ENCODE measurements at regions of chr1 and their contacts with region 1.

Region 1: DNA sequence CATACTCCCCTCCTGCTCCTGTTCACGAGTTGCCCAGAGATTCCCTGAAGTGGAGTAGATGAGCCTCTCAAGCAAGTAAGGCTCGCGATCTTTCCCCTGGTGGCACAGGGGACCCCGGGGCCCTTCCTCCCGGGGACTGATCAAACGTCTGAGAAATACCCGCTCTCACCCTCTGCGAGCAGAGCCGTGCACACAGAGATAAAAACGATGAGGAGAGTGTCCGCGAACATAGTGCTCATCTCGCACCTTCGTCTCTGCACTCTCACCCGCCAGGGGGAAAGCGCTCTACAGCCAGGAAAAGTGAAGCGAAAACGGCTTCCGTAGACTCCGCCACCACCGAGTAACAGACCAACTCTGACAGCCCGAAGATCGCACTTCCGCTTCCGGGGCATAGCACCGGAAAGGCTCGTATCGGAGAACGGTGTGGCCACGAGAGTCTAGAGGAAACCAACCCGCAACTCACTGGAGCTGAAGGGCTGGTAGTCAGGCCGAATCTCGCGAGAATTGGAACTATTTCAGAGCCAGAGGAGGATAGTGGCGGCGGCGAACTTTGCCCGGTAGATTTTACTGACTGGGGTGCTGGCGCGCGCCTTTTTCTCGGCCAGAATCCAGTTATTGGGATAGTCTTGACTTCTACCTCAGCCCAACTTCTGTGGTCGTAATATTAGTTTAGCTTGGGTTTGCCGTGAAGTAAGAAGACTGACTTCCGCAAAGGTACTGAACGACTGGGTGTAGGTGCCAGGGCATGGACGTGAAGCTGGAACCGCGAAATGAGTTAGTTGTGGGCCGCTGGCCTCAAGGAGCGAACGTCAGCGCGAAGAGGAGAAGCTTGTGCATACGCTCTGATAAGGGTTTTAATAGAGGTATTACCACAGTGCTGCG is at the start of gene TMCO1:
- DNase-seq: peak; percentile 95
- H3K4me3 Mint-ChIP-seq: peak within 1 kb of the TSS; percentile 94
- H3K27ac Mint-ChIP-seq: peak within 1 kb of the TSS; percentile 96
- H3K4me1 Mint-ChIP-seq: peaks cover 38% of the 10 kb centered on the region
- H3K27me3 Mint-ChIP-seq: no peaks in the 10 kb centered on the region
- total RNA-seq, gene TMCO1: 83.3 and 85.8 TPM in 2 replicates

Region 2: GRCh38 chr1:165630629-165631341 is 138.0 kb before region 1 on chr1 and contains the start of gene MGST3:
- intact Hi-C with region 1: loop called (anchors 2 kb)
- DNase-seq: peak; percentile 93
- H3K4me3 Mint-ChIP-seq: no peak within 1 kb of the TSS
- H3K27ac Mint-ChIP-seq: peak within 1 kb of the TSS; percentile 52
- H3K4me1 Mint-ChIP-seq: peaks cover 23% of the 10 kb centered on the region
- H3K27me3 Mint-ChIP-seq: peaks cover 6% of the 10 kb centered on the region
- total RNA-seq, gene MGST3: 63.6 and 63.7 TPM in 2 replicates

Region 3: GRCh38 chr1:165697881-165698760 is 70.6 kb before region 1 on chr1 and contains the start of gene ALDH9A1:
- intact Hi-C with region 1: loop called (anchors 1 kb)
- DNase-seq: peak; percentile 84
- H3K4me3 Mint-ChIP-seq: peak within 1 kb of the TSS; percentile 100
- H3K27ac Mint-ChIP-seq: peak within 1 kb of the TSS; percentile 99
- H3K4me1 Mint-ChIP-seq: peaks cover 18% of the 10 kb centered on the region
- H3K27me3 Mint-ChIP-seq: peaks cover 3% of the 10 kb centered on the region
- total RNA-seq, gene ALDH9A1: 43.3 and 47.4 TPM in 2 replicates

Region 4: DNA sequence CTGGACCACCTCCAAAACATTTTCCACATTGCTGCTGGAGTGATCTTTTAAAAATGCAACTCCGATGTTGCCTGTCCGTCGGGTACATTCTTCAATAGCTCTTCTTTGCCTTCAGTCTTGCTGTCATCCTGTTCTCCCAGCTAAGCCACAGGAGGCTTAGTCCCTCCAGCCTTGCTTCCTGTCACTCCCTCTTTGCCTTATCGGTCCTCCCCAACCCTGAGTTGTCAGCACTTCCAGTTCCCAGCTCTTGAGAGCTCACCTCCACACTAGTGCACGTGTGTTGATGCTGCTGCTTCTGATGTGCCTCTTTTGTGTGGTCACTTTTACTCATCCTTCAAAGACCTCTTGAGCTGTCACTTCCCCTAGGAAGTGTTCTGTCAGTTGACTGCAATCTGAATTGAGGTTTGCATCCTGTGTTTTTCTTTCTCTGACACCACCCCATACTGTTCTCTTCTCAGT is 73.9 kb after region 1 on chr1:
- intact Hi-C with region 1: loop called (anchors 2 kb)
- DNase-seq: peak; percentile 21
- H3K4me3 Mint-ChIP-seq: peak overlapping the region; percentile 58
- H3K27ac Mint-ChIP-seq: peak overlapping the region; percentile 67
- H3K4me1 Mint-ChIP-seq: peaks cover 74% of the 10 kb centered on the region
- H3K27me3 Mint-ChIP-seq: no peaks in the 10 kb centered on the region

Region 5: GRCh38 chr1:165871311-165872067 is 102.7 kb after region 1 on chr1:
- intact Hi-C with region 1: loop called (anchors 2 kb)
- DNase-seq: peak; percentile 65
- H3K4me3 Mint-ChIP-seq: peak overlapping the region; percentile 66
- H3K27ac Mint-ChIP-seq: peak overlapping the region; percentile 81
- H3K4me1 Mint-ChIP-seq: peaks cover 62% of the 10 kb centered on the region
- H3K27me3 Mint-ChIP-seq: no peaks in the 10 kb centered on the region

Region 6: GRCh38 chr1:165914136-165914798 is 145.5 kb after region 1 on chr1:
- intact Hi-C with region 1: loop called (anchors 1 kb)
- DNase-seq: peak; percentile 56
- H3K4me3 Mint-ChIP-seq: no peak overlapping the region
- H3K27ac Mint-ChIP-seq: no peak overlapping the region
- H3K4me1 Mint-ChIP-seq: peaks cover 5% of the 10 kb centered on the region
- H3K27me3 Mint-ChIP-seq: no peaks in the 10 kb centered on the region

Measured in activated T-helper 2 cell treated with anti-CD3 and anti-CD28 coated beads, Interferon-gamma antibody, Interleukin-2, Interleukin-4, amounts not matched to agents 10 μg/mL and 5 μg/mL and 100 μg/mL, durations not matched to agents 14 hours and 24 hours and 36 hours (primary cell).